Left colon (tissue), 2 donors: ENCODE measurements at regions of chr15 and their contacts with region 1.

Region 1: GRCh38 chr15:97960364-97961066 is at the start of gene ARRDC4:
- DNase-seq: peak in 1 of 2 donors; percentile 100
- ATAC-seq: peak; percentile 89
- total RNA-seq, gene ARRDC4: 29.0 to 55.6 TPM

Region 2: DNA sequence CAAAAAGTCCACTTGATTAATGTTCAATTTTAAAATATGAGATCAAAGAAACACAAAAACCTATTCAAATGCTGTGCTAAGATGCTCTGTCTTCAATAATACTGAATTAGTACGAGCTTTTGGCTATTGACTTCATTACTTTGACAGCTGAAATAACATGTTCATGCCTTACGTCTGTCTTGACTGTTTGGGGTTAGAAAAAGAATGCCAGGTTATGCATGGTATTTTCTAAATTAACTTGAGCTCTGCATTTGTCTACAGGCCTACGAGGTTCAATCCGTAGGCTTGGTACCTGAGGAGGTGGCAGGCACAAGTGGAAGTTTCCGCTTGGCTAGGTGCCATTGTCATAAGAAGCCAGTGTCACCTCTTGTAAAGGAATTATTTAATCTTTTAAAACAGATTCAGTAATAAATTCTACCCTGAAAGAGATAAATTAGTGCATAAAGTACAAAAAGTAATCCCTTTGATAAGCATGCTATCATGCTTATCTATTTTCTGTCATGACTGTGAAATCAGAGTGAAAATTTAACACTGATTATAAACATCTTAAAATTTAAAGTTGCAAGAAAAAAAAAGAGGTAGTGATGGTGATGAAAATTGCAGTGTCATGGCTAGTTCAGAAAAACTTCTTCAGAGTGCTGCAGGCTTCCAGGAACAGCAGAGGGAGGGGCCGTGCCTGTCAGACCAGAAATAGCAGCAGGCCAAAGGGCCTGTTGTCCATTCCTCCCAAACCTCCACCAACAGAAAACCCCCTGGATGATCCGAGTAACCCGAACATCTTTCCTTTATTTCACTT is 115.7 kb after region 1 on chr15:
- intact Hi-C with region 1: loop called in 1 of 2 experiments (anchors 10 kb)
- DNase-seq: peak in 1 of 2 donors; percentile 44
- ATAC-seq: no peak